Cardiac septum (tissue), 1 donor: ENCODE measurements at regions of chr4 and their contacts with region 1.

Region 1: GRCh38 chr4:57163530-57164459 is 53.6 kb upstream of the IGFBP7 start:
- DNase-seq: peak; percentile 91

Region 2: DNA sequence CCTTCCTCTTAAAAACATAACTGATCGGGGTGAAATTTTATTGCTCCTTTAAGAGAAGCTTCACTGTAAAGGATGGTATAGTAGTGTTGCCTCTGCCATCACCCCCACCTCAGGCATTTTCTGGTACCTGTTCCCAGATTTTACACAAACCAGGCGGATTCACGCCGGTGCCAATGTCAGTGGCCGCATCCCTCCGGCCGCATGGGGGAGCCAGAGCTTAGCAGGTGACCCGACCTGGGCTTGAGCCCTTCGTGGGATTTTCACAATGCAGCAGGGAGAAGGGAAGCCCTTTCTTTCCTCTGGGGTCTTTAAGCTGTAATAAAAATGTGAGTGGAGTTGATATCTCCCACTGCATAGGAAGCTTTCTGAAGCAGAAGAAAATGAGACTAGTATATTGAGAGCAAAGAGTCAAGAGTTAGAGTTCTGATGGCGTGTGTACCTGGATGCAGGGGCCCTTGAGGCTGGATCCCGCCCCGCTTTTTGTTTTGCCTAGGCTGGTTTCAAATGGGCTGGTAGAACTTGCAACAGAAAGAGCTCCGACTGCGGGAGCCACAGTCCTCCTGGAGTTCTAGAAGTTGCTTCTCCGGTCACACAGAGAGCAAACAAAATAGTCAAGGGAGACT is 125.7 kb before region 1 on chr4:
- intact Hi-C with region 1: loop called (anchors 2 kb)
- DNase-seq: no peak

Region 3: DNA sequence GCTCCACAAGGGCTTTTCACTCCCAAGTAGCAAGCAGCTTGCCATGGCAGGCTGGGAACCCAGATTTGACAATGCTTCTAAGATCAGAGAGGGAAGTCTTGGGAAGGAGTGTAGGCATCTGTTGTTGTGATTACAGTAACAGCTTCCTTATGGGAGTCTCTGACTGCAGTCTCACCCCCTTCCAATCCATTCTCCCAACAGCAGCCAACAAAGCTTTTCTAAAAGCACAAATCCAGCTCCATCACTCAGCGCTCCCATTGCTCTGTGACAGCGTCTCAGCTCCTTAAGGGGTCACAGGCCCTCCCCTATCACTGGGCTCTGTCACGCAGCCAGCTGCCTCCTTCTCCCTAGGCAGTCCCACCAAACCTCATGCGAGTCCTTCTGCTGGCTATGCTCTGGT is 60.7 kb before region 1 on chr4:
- intact Hi-C with region 1: no loop called
- DNase-seq: no peak

Region 4: GRCh38 chr4:57303012-57303751 is 139.4 kb after region 1 on chr4:
- intact Hi-C with region 1: loop called (anchors 5 kb)
- DNase-seq: no peak